ENCODE measurements at regions of chr4 and their contacts with region 1.

Region 1: GRCh38 chr4:109294006-109294405 is 8.5 kb downstream of the COL25A1 start:
- DNase-seq: peak; percentile 30
- H3K4me3 Mint-ChIP-seq: no peak overlapping the region
- H3K27ac Mint-ChIP-seq: no peak overlapping the region
- H3K4me1 Mint-ChIP-seq: no peaks in the 10 kb centered on the region
- H3K27me3 Mint-ChIP-seq: no peaks in the 10 kb centered on the region
- CTCF ChIP-seq: peak; percentile 11

Region 2: GRCh38 chr4:108683479-108683878 is 610.5 kb before region 1 on chr4:
- CTCF ChIA-PET with region 1: interaction called, 17 read pairs
- POLR2A ChIA-PET with region 1: no interaction called
- intact Hi-C with region 1: loop called (anchors 1 kb)
- DNase-seq: peak; percentile 53
- H3K4me3 Mint-ChIP-seq: no peak overlapping the region
- H3K27ac Mint-ChIP-seq: no peak overlapping the region
- H3K4me1 Mint-ChIP-seq: no peaks in the 10 kb centered on the region
- H3K27me3 Mint-ChIP-seq: no peaks in the 10 kb centered on the region
- CTCF ChIP-seq: peak; percentile 30

Region 3: DNA sequence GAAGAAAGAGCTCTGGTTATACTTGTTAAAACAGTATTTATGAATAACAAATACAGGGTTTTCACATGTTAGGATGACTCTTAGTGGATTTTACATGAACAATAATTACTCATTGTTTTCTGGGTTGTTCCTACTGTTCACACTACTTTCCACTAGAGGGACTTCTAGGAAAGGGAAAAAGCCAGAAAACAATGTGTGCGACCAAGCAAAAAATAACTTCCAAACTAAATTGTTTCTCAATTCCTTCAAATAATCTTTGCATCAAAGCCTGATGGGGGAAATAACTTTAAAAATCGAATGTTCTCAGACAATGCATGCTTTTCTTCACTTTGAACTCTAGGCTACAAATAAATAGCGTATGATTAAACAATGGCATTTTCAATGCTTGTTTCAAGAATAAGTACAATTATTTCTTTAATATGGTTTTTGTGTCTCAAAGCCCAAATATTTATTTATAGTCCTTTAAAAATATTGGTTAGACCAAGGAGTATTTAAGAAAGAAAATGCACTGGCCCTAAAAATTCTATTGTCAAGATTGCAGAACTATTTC is 459.1 kb before region 1 on chr4:
- CTCF ChIA-PET with region 1: interaction called, 44 read pairs
- POLR2A ChIA-PET with region 1: interaction called, 6 read pairs
- intact Hi-C with region 1: loop called (anchors 1 kb)
- DNase-seq: peak; percentile 67
- H3K4me3 Mint-ChIP-seq: no peak overlapping the region
- H3K27ac Mint-ChIP-seq: no peak overlapping the region
- H3K4me1 Mint-ChIP-seq: peaks cover 15% of the 10 kb centered on the region
- H3K27me3 Mint-ChIP-seq: no peaks in the 10 kb centered on the region
- CTCF ChIP-seq: peak; percentile 71

Region 4: DNA sequence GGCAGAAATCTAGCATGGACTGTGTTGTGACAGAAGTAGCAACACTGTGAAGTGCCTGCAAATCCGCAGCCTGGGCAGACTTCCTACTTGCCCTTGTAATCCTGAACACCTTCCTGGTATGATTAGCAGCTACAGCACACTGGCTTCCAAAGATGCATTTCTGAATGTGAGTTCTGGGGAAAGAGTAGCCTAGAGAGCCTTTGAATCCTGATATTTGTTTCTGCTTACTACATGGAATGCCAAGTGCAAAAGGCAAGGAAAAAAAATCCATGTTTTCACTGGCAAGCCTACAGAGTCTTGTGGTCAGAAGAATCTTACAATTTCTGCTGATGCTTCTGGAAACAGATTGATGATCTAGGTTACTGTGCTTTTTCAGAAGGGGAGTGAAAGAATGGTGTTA is 215.3 kb before region 1 on chr4:
- CTCF ChIA-PET with region 1: no interaction called
- POLR2A ChIA-PET with region 1: no interaction called
- intact Hi-C with region 1: loop called (anchors 10 kb)
- DNase-seq: peak; percentile 66
- H3K4me3 Mint-ChIP-seq: peak overlapping the region; percentile 19
- H3K27ac Mint-ChIP-seq: peak overlapping the region; percentile 58
- H3K4me1 Mint-ChIP-seq: peaks cover 15% of the 10 kb centered on the region
- H3K27me3 Mint-ChIP-seq: no peaks in the 10 kb centered on the region
- CTCF ChIP-seq: no peak

Region 5: DNA sequence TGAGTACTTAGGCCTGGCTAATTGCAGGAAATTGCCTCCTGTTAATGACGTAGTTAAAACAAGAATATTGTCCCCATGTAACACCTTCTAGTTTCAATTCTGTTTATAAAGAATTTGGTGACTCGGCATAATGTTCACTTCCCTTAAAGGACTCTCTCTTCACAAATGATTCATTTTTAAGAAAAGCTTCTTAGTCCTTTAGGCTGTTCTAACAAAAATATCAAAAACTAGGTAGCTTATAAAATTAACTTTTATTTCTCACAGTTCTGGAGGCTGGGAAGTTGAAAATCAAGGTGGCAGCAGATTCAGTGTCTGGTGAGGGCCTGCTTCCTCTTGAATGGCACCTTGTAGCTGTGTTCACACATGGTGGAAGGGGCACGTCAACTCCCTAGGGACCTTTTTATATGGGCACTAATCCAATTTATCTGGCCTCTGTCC is 15.4 kb before region 1 on chr4:
- CTCF ChIA-PET with region 1: interaction called, 12 read pairs
- POLR2A ChIA-PET with region 1: no interaction called
- intact Hi-C with region 1: no loop called
- DNase-seq: no peak
- H3K4me3 Mint-ChIP-seq: no peak overlapping the region
- H3K27ac Mint-ChIP-seq: no peak overlapping the region
- H3K4me1 Mint-ChIP-seq: no peaks in the 10 kb centered on the region
- H3K27me3 Mint-ChIP-seq: no peaks in the 10 kb centered on the region
- CTCF ChIP-seq: no peak

Region 6: GRCh38 chr4:109368661-109369060 is 74.7 kb after region 1 on chr4:
- CTCF ChIA-PET with region 1: no interaction called
- POLR2A ChIA-PET with region 1: no interaction called
- intact Hi-C with region 1: no loop called
- DNase-seq: no peak
- H3K4me3 Mint-ChIP-seq: no peak overlapping the region
- H3K27ac Mint-ChIP-seq: no peak overlapping the region
- H3K4me1 Mint-ChIP-seq: no peaks in the 10 kb centered on the region
- H3K27me3 Mint-ChIP-seq: peaks cover 11% of the 10 kb centered on the region
- CTCF ChIP-seq: no peak

Region 7: DNA sequence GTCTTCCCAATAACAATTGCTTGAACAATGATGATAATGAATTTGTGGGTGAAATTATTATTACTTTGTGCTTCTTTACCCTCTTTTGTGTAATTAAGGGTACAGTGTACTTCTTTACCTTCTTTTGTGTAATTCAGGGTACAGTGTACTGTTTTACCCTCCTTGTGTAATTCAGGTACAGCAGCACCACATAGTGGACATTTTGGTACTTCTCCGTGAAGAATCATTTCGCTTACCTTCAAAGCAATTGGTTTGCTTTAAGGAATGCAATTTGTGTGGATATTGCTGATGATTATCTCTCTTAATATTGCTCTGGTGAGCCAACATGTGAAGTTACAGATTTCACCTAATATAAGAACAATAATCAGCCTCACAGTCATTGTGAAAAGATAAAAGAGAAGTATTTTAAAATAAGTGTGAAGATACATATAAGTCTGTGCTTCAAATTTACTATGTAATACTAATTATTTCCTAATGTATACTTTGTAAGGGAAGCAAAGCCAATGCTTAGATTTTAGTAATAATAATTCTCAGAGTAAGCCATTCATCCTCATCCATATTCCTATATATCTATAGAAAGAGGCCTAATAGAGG is 112.4 kb after region 1 on chr4:
- CTCF ChIA-PET with region 1: interaction called, 8 read pairs
- POLR2A ChIA-PET with region 1: no interaction called
- intact Hi-C with region 1: loop called (anchors 1 kb)
- DNase-seq: peak; percentile 68
- H3K4me3 Mint-ChIP-seq: no peak overlapping the region
- H3K27ac Mint-ChIP-seq: no peak overlapping the region
- H3K4me1 Mint-ChIP-seq: peaks cover 13% of the 10 kb centered on the region
- H3K27me3 Mint-ChIP-seq: no peaks in the 10 kb centered on the region
- CTCF ChIP-seq: peak; percentile 71

Region 8: DNA sequence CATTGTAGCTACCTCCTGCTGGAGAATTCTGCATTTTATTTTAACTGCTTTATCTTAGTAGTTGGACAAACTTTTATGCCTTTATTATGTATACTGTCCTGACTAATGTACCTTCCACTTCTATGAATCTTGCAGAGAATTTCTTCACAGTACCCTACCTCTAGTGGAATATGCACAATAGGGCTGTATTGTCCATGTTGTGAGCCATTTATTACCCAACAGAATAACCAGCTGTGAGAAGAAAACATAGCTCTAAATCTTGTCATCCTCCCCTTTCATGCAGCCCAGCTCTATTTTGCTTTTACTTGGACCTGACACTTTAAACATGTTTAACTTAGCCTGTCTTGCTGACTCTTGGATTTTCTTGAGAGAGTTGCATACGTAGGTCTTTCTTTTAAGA is 322.2 kb after region 1 on chr4:
- CTCF ChIA-PET with region 1: no interaction called
- POLR2A ChIA-PET with region 1: no interaction called
- intact Hi-C with region 1: no loop called
- DNase-seq: no peak
- H3K4me3 Mint-ChIP-seq: no peak overlapping the region
- H3K27ac Mint-ChIP-seq: no peak overlapping the region
- H3K4me1 Mint-ChIP-seq: no peaks in the 10 kb centered on the region
- H3K27me3 Mint-ChIP-seq: no peaks in the 10 kb centered on the region
- CTCF ChIP-seq: no peak

Measured in MCF 10A (cell line).